ENCODE measurements at regions of chr11 and their contacts with region 1.

Region 1: DNA sequence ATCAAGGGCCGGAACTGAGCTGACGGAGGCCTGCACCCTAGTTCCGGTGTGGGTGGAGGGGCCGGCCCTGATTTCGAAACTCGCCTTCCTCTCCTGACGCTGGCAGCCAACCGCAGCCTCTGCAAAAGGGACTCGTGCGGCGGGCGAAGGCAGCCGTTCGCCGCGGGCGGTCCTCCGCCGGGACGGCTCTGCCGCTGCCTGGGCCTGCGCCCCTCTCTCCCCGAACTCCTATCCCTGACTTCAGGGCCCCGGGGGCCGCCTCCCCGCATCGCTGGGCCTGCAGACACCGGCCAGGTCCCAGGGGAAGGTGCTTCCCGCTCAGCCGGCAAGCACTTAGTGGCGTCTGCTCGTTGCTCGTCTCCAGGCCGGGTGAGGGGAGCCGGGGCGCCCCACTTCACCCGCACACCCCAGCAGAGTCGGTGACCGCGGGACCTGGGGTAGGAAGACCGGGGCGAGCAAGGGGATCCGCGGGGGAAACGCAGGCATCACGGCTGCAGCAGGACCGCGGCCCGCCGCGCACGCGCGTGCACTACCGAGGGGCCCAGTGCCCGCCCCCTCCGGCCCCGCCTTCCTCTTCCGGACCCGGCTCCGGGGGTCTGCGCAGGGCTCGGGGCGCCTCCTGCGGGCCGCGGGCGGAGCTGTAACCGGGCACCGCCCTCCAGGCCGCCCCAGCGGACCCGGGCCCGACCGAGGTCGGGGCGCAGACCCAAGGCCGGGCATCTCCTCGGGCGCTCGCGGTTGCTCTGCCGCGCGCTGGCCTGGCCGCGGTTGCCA is 464 bp upstream of the ANKRD13D start:
- DNase-seq: peak in 1 of 2 experiments; percentile 91
- H3K4me3 ChIP-seq: peak overlapping the region; percentile 58 to 85 (median 72)
- H3K27ac ChIP-seq: peak overlapping the region; percentile 86
- H3K4me1 ChIP-seq: peaks cover 0 to 18% (median 11%) of the 10 kb centered on the region in 4 experiments; a peak in 6 of 7 replicates
- H3K27me3 ChIP-seq: no peaks in the 10 kb centered on the region
- CTCF ChIP-seq: peak in 2 of 3 experiments; percentile 52 to 79; a peak in 3 of 4 replicates
- EP300 ChIP-seq: no peak
- POLR2A ChIP-seq: peak in 1 of 2 experiments; percentile 61; a peak in 1 of 3 replicates
- RAD21 ChIP-seq: peak; percentile 48 to 80; a peak in 3 of 4 replicates

Region 2: DNA sequence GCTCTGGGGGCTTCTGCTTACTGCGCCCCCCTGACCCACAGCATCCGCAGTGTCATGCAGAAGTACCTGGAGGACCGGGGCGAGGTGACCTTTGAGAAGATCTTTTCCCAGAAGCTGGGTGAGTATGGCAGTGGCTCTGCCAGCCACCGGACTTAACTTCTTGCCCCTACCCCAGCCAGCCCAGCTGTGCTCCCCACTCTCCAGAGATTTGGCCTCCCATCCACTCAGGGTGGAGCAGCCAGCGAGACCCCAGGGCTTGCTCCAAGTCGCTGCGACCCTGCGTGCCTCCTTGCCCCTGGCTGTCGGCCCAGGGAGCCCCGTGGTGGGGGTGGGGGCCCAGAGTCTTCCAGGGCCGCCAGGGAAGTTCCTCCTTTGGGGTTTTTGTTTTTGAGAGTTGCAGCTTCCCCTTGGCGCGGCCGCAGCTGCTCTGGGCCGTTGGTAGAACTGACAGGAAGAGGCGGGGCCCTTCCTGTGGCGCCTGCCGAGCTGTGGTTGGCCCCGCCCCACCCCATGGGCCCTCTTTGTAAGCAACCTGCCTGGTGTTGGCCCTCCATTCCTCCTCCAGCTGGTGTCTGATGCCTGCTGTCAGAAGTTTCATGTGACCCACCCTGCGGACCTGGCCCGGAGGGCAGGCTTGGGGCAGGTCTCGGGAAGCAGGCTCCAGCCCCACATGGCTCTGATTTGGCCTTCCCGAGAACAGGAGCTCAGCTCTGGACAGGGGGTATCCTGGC is 11.2 kb before region 1 on chr11:
- CTCF ChIA-PET with region 1: interaction called, 27 read pairs
- POLR2A ChIA-PET with region 1: interaction called, 20 read pairs
- DNase-seq: peak in 1 of 2 experiments; percentile 82
- H3K4me3 ChIP-seq: peak overlapping the region in 1 of 4 experiments; percentile 20; a peak in 1 of 8 replicates
- H3K27ac ChIP-seq: 0 out of 2 replicates have a peak overlapping the region, but pooled peaks have one; percentile 59
- H3K4me1 ChIP-seq: peaks cover 0 to 24% (median 15%) of the 10 kb centered on the region in 4 experiments; a peak in 6 of 7 replicates
- H3K27me3 ChIP-seq: no peaks in the 10 kb centered on the region
- CTCF ChIP-seq: 0 out of 4 replicates have a peak, but pooled peaks of 1 of the 3 experiments have one; percentile 3
- EP300 ChIP-seq: no peak
- POLR2A ChIP-seq: no peak
- RAD21 ChIP-seq: no peak

Region 3: DNA sequence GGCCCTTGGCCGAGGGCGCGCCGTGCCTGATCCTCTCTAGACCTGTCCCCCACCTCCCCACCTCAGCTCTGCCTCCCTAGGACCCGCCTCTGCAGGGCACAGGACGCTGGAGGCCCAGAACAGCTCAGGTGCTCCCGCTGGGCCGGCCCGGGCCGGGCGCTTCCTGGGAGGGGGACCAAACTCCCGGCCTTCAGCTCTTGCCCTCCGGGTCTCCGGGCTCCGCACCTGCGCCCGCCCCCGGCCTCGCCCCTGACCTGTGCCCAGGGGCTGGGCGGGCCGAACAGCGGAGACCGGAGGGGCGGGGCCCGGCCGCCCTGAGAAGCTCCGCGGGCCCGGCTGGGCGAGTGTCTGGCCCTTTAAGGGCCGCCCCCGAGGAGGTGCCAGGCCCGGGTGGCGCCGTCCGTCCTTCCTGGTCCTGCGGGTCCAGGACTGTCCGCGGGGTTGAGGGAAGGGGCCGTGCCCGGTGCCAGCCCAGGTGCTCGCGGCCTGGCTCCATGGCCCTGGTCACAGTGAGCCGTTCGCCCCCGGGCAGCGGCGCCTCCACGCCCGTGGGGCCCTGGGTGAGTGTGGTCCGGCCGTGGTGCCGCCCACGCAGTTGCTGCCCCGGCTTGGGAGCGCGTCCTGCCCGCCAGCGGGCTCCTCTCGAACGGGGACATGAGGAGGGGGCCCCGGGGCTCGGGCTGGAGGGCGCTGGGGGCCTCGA is 14.6 kb after region 1 on chr11 and contains the start of gene SSH3:
- CTCF ChIA-PET with region 1: interaction called, 14 read pairs
- POLR2A ChIA-PET with region 1: interaction called, 106 read pairs
- DNase-seq: peak in 1 of 2 experiments; percentile 46
- H3K4me3 ChIP-seq: peak within 1 kb of the TSS; percentile 67 to 94 (median 74)
- H3K27ac ChIP-seq: no peak within 1 kb of the TSS
- H3K4me1 ChIP-seq: peaks cover 0 to 20% (median 16%) of the 10 kb centered on the region in 4 experiments; a peak in 5 of 7 replicates
- H3K27me3 ChIP-seq: peaks cover 0 to 11% (median 7%) of the 10 kb centered on the region in 4 experiments; a peak in 5 of 7 replicates
- CTCF ChIP-seq: no peak
- EP300 ChIP-seq: no peak
- POLR2A ChIP-seq: no peak; a peak in 1 of 3 replicates
- RAD21 ChIP-seq: no peak
- total RNA-seq, gene SSH3: 19.8 and 23.6 TPM in 2 replicates

Region 4: DNA sequence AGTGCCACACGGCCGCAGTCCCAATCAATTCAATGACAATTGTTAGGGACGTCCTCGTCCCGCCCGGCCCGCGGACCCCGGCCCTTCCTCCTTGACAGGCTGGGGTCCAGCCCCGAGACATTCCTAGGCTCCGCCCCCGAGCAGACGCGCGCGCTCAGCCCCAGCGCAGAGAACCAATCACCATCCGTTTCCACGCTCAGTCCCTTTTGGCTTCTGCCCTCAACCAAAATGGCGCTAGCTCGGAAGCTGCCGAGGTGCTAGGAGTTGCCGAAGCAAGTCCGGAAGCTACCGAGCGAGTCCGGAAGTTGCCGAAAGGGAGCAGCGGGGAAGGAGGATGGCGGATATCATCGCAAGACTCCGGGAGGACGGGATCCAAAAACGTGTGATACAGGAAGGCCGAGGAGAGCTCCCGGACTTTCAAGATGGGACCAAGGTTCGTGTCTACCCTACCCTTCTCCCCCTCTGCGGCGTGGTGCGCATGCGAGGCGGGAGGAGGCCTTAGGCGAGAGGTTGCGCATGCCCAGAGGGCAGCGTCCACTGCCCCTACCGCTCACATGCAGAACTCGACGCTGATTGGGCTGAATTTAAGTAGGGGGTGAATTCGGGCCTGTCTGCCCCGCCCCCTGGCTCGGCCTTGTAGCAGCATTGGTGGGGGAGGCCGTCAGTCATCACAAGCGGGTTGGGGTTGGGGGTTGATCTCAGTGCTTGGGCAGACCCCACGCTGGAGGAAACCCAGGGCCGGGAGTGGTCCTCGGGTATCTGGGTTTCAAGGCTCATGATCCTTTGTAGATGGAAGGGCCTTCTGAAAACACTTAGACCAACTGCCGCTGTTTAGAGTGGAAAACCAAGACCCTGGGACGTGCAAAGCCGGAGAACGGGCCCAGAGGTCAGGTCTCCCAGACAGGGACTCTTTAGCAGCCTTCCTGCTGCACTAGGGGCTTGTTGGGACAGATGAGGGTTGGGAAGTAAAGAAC is 194.5 kb after region 1 on chr11 and contains the start of gene AIP:
- CTCF ChIA-PET with region 1: no interaction called
- POLR2A ChIA-PET with region 1: no interaction called
- DNase-seq: peak; percentile 93 to 97
- H3K4me3 ChIP-seq: peak within 1 kb of the TSS; percentile 44 to 64 (median 60)
- H3K27ac ChIP-seq: peak within 1 kb of the TSS; percentile 67
- H3K4me1 ChIP-seq: peaks cover 0 to 3% (median 3%) of the 10 kb centered on the region in 4 experiments; a peak in 3 of 7 replicates
- H3K27me3 ChIP-seq: peaks cover 0 to 10% (median 9%) of the 10 kb centered on the region in 4 experiments; a peak in 6 of 7 replicates
- CTCF ChIP-seq: peak in 1 of 3 experiments; percentile 8; a peak in 1 of 4 replicates
- EP300 ChIP-seq: no peak
- POLR2A ChIP-seq: peak in 1 of 2 experiments; percentile 64; a peak in 2 of 3 replicates
- RAD21 ChIP-seq: no peak
- total RNA-seq, gene AIP: 28.8 and 29.8 TPM in 2 replicates